Caco-2 (cell line): ENCODE measurements at regions of chr12 and their contacts with region 1.

Region 1: GRCh38 chr12:69290545-69291277 is 51.3 kb downstream of the CPSF6 start:
- DNase-seq: peak; percentile 82 to 85
- H3K4me3 ChIP-seq: no peak overlapping the region
- H3K4me3 Mint-ChIP-seq: no peak overlapping the region
- H3K27ac Mint-ChIP-seq: no peak overlapping the region
- H3K4me1 ChIP-seq: no peaks in the 10 kb centered on the region
- H3K4me1 Mint-ChIP-seq: peaks cover 11% of the 10 kb centered on the region
- H3K27me3 ChIP-seq: no peaks in the 10 kb centered on the region
- H3K27me3 Mint-ChIP-seq: no peaks in the 10 kb centered on the region
- CTCF ChIP-seq: peak; percentile 91 to 96

Region 2: DNA sequence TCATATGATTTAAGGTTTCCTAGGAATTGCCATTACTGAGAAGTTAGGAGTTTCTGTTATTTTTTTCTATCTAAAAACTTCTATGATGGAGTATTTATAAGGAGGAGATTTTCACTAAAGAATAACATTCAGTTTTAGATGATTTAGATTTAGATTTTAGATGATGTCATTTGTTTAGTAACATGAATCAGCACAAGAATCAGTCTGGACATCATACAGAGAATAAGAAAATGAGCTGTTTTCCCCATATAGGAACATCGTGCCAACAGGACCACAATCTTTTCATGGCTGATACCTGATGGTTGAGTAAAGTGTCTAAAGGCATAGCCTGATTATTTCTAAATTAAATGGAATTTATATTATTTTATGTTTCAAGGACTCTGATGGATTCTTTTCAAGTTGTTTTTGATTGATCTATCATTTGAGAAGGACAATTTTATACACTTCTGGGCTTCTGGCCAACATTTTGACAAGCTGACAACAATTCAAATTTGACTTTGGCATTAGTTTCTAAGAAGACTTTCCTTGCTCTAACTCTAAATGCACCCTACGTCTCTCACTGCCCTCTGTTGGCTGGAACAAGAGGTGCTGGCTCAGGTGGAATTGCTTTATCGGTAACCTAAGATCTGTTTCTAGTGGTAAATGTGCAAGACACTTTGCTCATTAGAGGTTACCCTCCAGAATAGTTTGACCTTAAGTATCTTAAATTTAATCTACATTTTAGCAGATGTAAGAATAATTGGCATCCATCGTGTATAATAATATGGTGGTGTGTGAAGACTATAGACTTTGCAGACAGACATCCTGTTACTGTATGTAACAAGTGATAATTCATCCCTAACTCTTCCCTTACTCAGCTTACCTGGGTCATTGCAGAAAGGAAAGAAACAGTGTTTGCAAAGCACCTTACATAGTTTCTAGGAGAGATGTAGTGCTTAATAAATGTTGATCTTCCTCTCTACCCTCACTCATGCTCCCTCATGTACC is 94.1 kb before region 1 on chr12:
- CTCF ChIA-PET with region 1: no interaction called
- POLR2A ChIA-PET with region 1: no interaction called
- intact Hi-C with region 1: no loop called
- DNase-seq: peak in 1 of 2 experiments; percentile 4
- H3K4me3 ChIP-seq: no peak overlapping the region
- H3K4me3 Mint-ChIP-seq: no peak overlapping the region
- H3K27ac Mint-ChIP-seq: no peak overlapping the region
- H3K4me1 ChIP-seq: no peaks in the 10 kb centered on the region
- H3K4me1 Mint-ChIP-seq: no peaks in the 10 kb centered on the region
- H3K27me3 ChIP-seq: no peaks in the 10 kb centered on the region
- H3K27me3 Mint-ChIP-seq: no peaks in the 10 kb centered on the region
- CTCF ChIP-seq: peak in 1 of 2 experiments; percentile 28

Region 3: GRCh38 chr12:69330475-69331473 is 40.1 kb after region 1 on chr12:
- CTCF ChIA-PET with region 1: interaction called, 3 read pairs
- POLR2A ChIA-PET with region 1: no interaction called
- intact Hi-C with region 1: loop called (anchors 1 kb)
- DNase-seq: peak; percentile 49 to 56
- H3K4me3 ChIP-seq: peak overlapping the region; percentile 60
- H3K4me3 Mint-ChIP-seq: peak overlapping the region; percentile 97
- H3K27ac Mint-ChIP-seq: peak overlapping the region; percentile 79
- H3K4me1 ChIP-seq: peaks cover 36% of the 10 kb centered on the region
- H3K4me1 Mint-ChIP-seq: peaks cover 40% of the 10 kb centered on the region
- H3K27me3 ChIP-seq: no peaks in the 10 kb centered on the region
- H3K27me3 Mint-ChIP-seq: no peaks in the 10 kb centered on the region
- CTCF ChIP-seq: no peak

Region 4: GRCh38 chr12:69388371-69388770 is 97.7 kb after region 1 on chr12:
- CTCF ChIA-PET with region 1: no interaction called
- POLR2A ChIA-PET with region 1: no interaction called
- intact Hi-C with region 1: loop called (anchors 2 kb)
- DNase-seq: peak in 1 of 2 experiments; percentile 50
- H3K4me3 ChIP-seq: no peak overlapping the region
- H3K4me3 Mint-ChIP-seq: no peak overlapping the region
- H3K27ac Mint-ChIP-seq: no peak overlapping the region
- H3K4me1 ChIP-seq: peaks cover 34% of the 10 kb centered on the region
- H3K4me1 Mint-ChIP-seq: peaks cover 15% of the 10 kb centered on the region
- H3K27me3 ChIP-seq: no peaks in the 10 kb centered on the region
- H3K27me3 Mint-ChIP-seq: no peaks in the 10 kb centered on the region
- CTCF ChIP-seq: peak; percentile 43 to 70

Region 5: DNA sequence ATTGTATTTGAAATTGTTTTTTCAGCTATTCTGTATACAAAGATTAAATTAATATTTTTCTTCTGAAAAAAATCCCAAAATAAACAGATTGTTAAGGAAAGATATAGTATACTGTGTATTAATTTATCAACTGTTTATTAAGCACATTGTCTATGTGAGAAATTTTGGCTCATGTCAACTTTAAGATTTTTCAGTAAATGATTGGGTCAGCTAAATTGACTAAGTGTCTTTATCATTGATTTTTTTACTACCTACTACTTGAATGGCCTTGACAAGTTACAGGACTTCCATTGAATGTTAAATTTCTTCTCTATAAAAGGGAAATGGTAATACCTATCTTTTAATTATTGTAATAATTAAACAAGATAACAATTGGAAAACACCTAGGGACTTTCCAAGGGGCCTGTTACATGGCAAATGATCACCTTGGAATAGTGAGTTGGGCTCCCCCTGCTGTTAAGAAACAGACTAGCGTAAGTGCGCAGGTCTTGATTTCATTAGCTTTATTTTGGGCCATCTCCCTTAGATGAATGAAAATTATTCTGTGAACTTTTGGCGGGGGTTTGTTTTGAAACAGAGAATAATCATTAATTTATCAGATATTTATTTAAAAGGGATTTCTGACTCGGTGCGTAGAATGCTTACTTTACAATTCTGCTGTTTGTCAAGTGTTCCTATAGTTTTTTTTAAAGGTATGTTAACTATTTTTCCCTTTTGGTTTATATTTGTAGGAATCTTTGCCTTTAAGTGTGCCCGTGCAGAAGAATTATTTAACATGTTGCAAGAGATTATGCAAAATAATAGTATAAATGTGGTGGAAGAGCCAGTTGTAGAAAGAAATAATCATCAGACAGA is 280.1 kb after region 1 on chr12:
- CTCF ChIA-PET with region 1: interaction called, 4 read pairs
- POLR2A ChIA-PET with region 1: no interaction called
- intact Hi-C with region 1: loop called (anchors 1 kb)
- DNase-seq: peak; percentile 65 to 73
- H3K4me3 ChIP-seq: no peak overlapping the region
- H3K4me3 Mint-ChIP-seq: no peak overlapping the region
- H3K27ac Mint-ChIP-seq: no peak overlapping the region
- H3K4me1 ChIP-seq: peaks cover 13% of the 10 kb centered on the region
- H3K4me1 Mint-ChIP-seq: peaks cover 27% of the 10 kb centered on the region
- H3K27me3 ChIP-seq: no peaks in the 10 kb centered on the region
- H3K27me3 Mint-ChIP-seq: no peaks in the 10 kb centered on the region
- CTCF ChIP-seq: peak; percentile 77 to 83

Region 6: DNA sequence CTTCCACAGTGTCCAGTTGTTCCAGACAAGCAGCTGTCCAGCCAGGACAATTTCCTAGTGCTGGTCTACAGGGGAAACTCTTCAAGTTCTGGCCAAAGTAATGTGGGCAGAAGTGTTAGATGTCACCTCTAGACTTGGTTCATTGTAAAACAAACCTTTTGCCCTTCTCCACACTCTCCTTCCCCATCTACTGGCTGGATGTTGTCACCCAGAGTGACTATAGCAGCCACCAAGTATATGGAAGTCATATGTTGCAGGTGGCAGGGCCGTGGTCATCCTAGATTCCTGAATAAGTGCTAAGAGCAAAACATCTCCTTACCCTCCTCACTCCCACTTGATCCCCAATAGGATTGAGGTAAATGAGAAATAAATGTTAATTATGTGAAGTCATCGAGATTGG is 321.8 kb after region 1 on chr12:
- CTCF ChIA-PET with region 1: no interaction called
- POLR2A ChIA-PET with region 1: no interaction called
- intact Hi-C with region 1: loop called (anchors 1 kb)
- DNase-seq: no peak
- H3K4me3 ChIP-seq: no peak overlapping the region
- H3K4me3 Mint-ChIP-seq: no peak overlapping the region
- H3K27ac Mint-ChIP-seq: no peak overlapping the region
- H3K4me1 ChIP-seq: no peaks in the 10 kb centered on the region
- H3K4me1 Mint-ChIP-seq: no peaks in the 10 kb centered on the region
- H3K27me3 ChIP-seq: no peaks in the 10 kb centered on the region
- H3K27me3 Mint-ChIP-seq: no peaks in the 10 kb centered on the region
- CTCF ChIP-seq: no peak

Region 7: GRCh38 chr12:69639400-69640016 is 348.8 kb after region 1 on chr12:
- CTCF ChIA-PET with region 1: no interaction called
- POLR2A ChIA-PET with region 1: no interaction called
- intact Hi-C with region 1: loop called (anchors 1 kb)
- DNase-seq: peak; percentile 70 to 75
- H3K4me3 ChIP-seq: no peak overlapping the region
- H3K4me3 Mint-ChIP-seq: no peak overlapping the region
- H3K27ac Mint-ChIP-seq: no peak overlapping the region
- H3K4me1 ChIP-seq: no peaks in the 10 kb centered on the region
- H3K4me1 Mint-ChIP-seq: no peaks in the 10 kb centered on the region
- H3K27me3 ChIP-seq: no peaks in the 10 kb centered on the region
- H3K27me3 Mint-ChIP-seq: no peaks in the 10 kb centered on the region
- CTCF ChIP-seq: peak; percentile 81 to 89

Region 8: GRCh38 chr12:69655377-69656336 is 364.9 kb after region 1 on chr12:
- CTCF ChIA-PET with region 1: no interaction called
- POLR2A ChIA-PET with region 1: no interaction called
- intact Hi-C with region 1: no loop called
- DNase-seq: peak; percentile 30 to 56
- H3K4me3 ChIP-seq: no peak overlapping the region
- H3K4me3 Mint-ChIP-seq: no peak overlapping the region
- H3K27ac Mint-ChIP-seq: peak overlapping the region; percentile 89
- H3K4me1 ChIP-seq: peaks cover 29% of the 10 kb centered on the region
- H3K4me1 Mint-ChIP-seq: peaks cover 25% of the 10 kb centered on the region
- H3K27me3 ChIP-seq: no peaks in the 10 kb centered on the region
- H3K27me3 Mint-ChIP-seq: no peaks in the 10 kb centered on the region
- CTCF ChIP-seq: no peak